Activated CD8-positive, alpha-beta T cell treated with anti-CD3 and anti-CD28 coated beads for 36 hours (primary cell): ENCODE measurements at regions of chr4 and their contacts with region 1.

Region 1: GRCh38 chr4:38902695-38903094 is 35.1 kb downstream of the FAM114A1 start:
- DNase-seq: no peak
- ATAC-seq: peak; percentile 84
- H3K4me3 Mint-ChIP-seq: no peak overlapping the region
- H3K27ac Mint-ChIP-seq: no peak overlapping the region
- H3K4me1 Mint-ChIP-seq: peaks cover 5% of the 10 kb centered on the region
- H3K27me3 Mint-ChIP-seq: peaks cover 7% of the 10 kb centered on the region
- CTCF ChIP-seq: peak; percentile 61

Region 2: GRCh38 chr4:38424151-38424871 is 478.4 kb before region 1 on chr4:
- CTCF ChIA-PET with region 1: no interaction called
- POLR2A ChIA-PET with region 1: no interaction called
- intact Hi-C with region 1: no loop called
- DNase-seq: no peak
- ATAC-seq: no peak
- H3K4me3 Mint-ChIP-seq: no peak overlapping the region
- H3K27ac Mint-ChIP-seq: no peak overlapping the region
- H3K4me1 Mint-ChIP-seq: peaks cover 6% of the 10 kb centered on the region
- H3K27me3 Mint-ChIP-seq: no peaks in the 10 kb centered on the region
- CTCF ChIP-seq: no peak

Region 3: DNA sequence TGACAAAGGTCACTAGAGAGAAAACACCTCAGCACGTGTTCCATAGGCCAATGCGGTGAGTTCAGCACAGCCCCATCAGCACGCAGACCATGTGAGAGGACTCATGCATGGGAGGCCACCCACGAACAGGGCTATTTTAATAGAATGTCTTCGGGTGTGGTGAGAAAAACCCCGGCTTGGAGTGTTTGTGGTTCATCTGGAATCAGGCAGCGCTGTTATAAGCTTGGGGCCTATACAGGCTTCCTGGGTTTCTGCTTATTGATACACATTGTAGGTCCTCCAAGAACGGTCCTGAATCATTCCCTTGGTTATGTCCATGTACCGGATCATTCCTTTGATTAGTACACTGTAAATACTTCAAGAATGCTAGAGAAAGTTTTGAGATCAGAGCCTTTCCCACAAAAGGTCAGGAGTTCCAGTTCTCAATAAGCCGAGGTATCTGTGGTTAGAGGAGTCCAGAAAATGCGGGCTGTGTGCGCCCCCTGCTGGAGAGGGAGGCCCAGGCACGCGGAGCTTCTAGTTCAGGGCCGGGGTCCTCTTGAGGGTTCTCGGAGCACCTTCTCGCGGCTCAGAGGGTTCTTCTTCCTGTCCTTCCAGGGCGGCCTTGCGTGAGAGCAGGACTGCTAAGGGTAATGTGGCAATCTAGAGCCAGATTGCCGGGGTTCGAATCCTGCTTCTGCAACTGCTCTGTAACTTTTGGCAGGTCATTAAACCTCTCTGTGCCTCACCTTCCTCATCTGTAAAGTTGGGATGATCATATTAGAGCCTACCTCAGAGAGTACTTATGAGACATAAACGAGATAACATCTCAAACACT is 171.7 kb before region 1 on chr4:
- CTCF ChIA-PET with region 1: no interaction called
- POLR2A ChIA-PET with region 1: no interaction called
- intact Hi-C with region 1: no loop called
- DNase-seq: peak; percentile 91
- ATAC-seq: peak; percentile 93
- H3K4me3 Mint-ChIP-seq: no peak overlapping the region
- H3K27ac Mint-ChIP-seq: peak overlapping the region; percentile 64
- H3K4me1 Mint-ChIP-seq: peaks cover 15% of the 10 kb centered on the region
- H3K27me3 Mint-ChIP-seq: peaks cover 2% of the 10 kb centered on the region
- CTCF ChIP-seq: peak; percentile 99

Region 4: GRCh38 chr4:38889143-38889542 is 13.6 kb before region 1 on chr4:
- CTCF ChIA-PET with region 1: interaction called, 25 read pairs
- POLR2A ChIA-PET with region 1: interaction called, 3 read pairs
- intact Hi-C with region 1: no loop called
- DNase-seq: no peak
- ATAC-seq: peak; percentile 70
- H3K4me3 Mint-ChIP-seq: peak overlapping the region; percentile 40
- H3K27ac Mint-ChIP-seq: peak overlapping the region; percentile 91
- H3K4me1 Mint-ChIP-seq: peaks cover 25% of the 10 kb centered on the region
- H3K27me3 Mint-ChIP-seq: no peaks in the 10 kb centered on the region
- CTCF ChIP-seq: no peak

Region 5: DNA sequence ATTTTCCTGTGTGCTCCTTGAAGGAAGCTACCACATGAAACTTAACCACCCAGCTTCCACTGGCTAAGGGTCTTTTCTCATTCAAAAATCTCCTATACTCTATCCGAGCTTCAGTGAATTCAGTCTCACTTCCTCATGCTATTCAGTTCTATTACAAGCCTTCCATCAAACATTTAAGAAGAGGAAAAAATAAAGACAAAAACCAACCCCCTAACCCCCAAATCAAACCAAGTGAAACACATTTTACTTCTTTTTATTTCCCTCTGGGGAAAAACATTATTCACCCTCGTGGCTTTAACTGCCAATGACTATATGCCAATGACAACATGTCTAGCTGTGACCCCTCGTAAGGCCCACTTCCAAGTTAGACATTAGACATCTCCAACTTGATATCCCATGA is 263.5 kb after region 1 on chr4:
- CTCF ChIA-PET with region 1: interaction called, 13 read pairs
- POLR2A ChIA-PET with region 1: no interaction called
- intact Hi-C with region 1: no loop called
- DNase-seq: no peak
- ATAC-seq: no peak
- H3K4me3 Mint-ChIP-seq: no peak overlapping the region
- H3K27ac Mint-ChIP-seq: no peak overlapping the region
- H3K4me1 Mint-ChIP-seq: peaks cover 3% of the 10 kb centered on the region
- H3K27me3 Mint-ChIP-seq: no peaks in the 10 kb centered on the region
- CTCF ChIP-seq: no peak